ENCODE measurements at regions of chrX and their contacts with region 1.

Region 1: DNA sequence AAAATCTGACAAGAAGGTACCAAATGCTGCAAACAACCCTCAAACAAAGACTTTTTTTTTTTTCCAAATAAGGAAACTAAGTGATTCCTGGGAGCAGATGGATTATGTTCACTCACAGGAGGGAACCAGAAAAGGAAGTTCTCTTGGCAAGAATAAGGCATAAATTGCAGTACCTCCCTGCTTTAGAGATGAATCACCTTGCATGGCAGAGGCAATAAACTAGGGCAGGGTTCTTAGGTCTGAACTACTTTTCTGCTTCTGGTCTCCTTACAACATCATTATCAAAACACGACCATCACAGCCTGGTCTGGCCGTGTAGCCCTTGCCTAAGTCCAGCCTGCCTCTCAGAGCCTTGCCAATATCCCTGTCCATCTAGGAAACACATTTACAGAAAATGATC is 6.3 kb downstream of the TMEM31 start:
- DNase-seq: peak; percentile 89
- ATAC-seq: peak; percentile 93
- H3K4me3 ChIP-seq: no peak overlapping the region
- H3K27ac ChIP-seq: peak overlapping the region; percentile 94
- H3K4me1 ChIP-seq: peaks cover 6% of the 10 kb centered on the region
- H3K27me3 ChIP-seq: peaks cover 3% of the 10 kb centered on the region; the same call in 1 of the 2 replicates
- CTCF ChIP-seq: no peak
- POLR2A ChIP-seq: no peak
- RAD21 ChIP-seq: no peak

Region 2: GRCh38 chrX:103608306-103608963 is 108.5 kb before region 1 on chrX:
- CTCF ChIA-PET with region 1: no interaction called
- POLR2A ChIA-PET with region 1: no interaction called
- dilution Hi-C with region 1: no loop called
- in situ Hi-C with region 1: no loop called
- intact Hi-C with region 1: no loop called
- DNase-seq: no peak
- ATAC-seq: peak; percentile 18
- H3K4me3 ChIP-seq: peak overlapping the region; percentile 98
- H3K27ac ChIP-seq: peak overlapping the region; percentile 74
- H3K4me1 ChIP-seq: peaks cover 4% of the 10 kb centered on the region; the same call in 1 of the 2 replicates
- H3K27me3 ChIP-seq: no peaks in the 10 kb centered on the region
- CTCF ChIP-seq: no peak
- POLR2A ChIP-seq: no peak
- RAD21 ChIP-seq: no peak

Region 3: GRCh38 chrX:103730796-103731493 is 14.0 kb after region 1 on chrX:
- CTCF ChIA-PET with region 1: no interaction called
- POLR2A ChIA-PET with region 1: no interaction called
- dilution Hi-C with region 1: no loop called
- in situ Hi-C with region 1: no loop called
- intact Hi-C with region 1: loop called (anchors 1 kb)
- DNase-seq: peak; percentile 86
- ATAC-seq: peak; percentile 69
- H3K4me3 ChIP-seq: no peak overlapping the region
- H3K27ac ChIP-seq: peak overlapping the region; percentile 81
- H3K4me1 ChIP-seq: peaks cover 8% of the 10 kb centered on the region
- H3K27me3 ChIP-seq: peaks cover 9% of the 10 kb centered on the region
- CTCF ChIP-seq: no peak
- POLR2A ChIP-seq: no peak
- RAD21 ChIP-seq: no peak

Measured in IMR-90 (cell line).